ENCODE measurements at regions of chr15 and their contacts with region 1.

Region 1: GRCh38 chr15:90062023-90062442 is 40.2 kb downstream of the IDH2 start:
- DNase-seq: no peak
- H3K4me3 ChIP-seq: no peak overlapping the region
- H3K27ac ChIP-seq: peak overlapping the region; percentile 73
- H3K4me1 ChIP-seq: peaks cover 63% of the 10 kb centered on the region
- H3K27me3 ChIP-seq: no peaks in the 10 kb centered on the region
- CTCF ChIP-seq: no peak
- POLR2A ChIP-seq: no peak

Region 2: DNA sequence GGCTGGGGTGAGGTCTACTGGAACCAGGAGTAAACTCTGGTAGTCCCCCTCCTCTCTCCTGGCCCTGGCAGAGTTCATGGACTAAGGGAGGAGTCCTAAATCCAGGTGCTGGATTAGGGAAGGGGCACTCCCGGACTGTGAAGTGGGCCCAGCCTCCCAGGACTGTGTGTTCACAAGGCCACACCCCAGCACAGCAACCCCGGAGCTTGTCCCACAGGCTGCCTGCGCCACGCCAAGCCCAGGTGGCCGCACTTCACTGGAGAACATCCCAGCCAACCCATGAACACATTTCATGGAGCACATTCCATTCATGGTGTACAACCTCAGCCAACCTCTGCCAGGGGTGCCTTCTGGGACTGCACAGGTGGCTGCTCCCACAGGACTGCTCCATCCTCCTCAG is 157.5 kb before region 1 on chr15:
- intact Hi-C with region 1: loop called (anchors 10 kb)
- DNase-seq: no peak
- H3K4me3 ChIP-seq: no peak overlapping the region
- H3K27ac ChIP-seq: no peak overlapping the region
- H3K4me1 ChIP-seq: no peaks in the 10 kb centered on the region
- H3K27me3 ChIP-seq: no peaks in the 10 kb centered on the region
- CTCF ChIP-seq: no peak
- POLR2A ChIP-seq: no peak

Region 3: DNA sequence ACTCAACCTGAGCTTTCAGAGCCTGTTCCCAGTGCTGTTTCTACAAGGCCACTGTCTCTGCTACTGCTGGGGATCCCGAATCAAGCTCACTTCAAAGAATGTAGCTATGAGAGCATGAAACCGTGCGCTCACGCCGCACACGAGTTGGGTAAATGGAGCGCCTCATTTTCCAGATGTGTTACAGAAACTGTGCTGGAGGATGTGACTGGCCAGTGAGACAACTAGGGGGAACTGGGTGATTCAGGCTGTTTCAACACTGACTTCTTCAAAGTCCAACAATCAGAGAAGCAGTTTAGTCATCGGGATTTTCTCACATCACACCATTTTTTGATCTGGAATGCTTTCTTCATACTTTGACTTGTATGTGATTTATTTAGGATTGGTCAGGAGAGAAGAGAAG is 57.4 kb before region 1 on chr15:
- intact Hi-C with region 1: no loop called
- DNase-seq: no peak
- H3K4me3 ChIP-seq: peak overlapping the region in 1 of 2 donors; percentile 4
- H3K27ac ChIP-seq: peak overlapping the region; percentile 95
- H3K4me1 ChIP-seq: peaks cover 72% of the 10 kb centered on the region
- H3K27me3 ChIP-seq: no peaks in the 10 kb centered on the region
- CTCF ChIP-seq: no peak
- POLR2A ChIP-seq: no peak

Region 4: GRCh38 chr15:90131848-90132247 is 69.8 kb after region 1 on chr15:
- intact Hi-C with region 1: no loop called
- DNase-seq: no peak
- H3K4me3 ChIP-seq: no peak overlapping the region
- H3K27ac ChIP-seq: no peak overlapping the region
- H3K4me1 ChIP-seq: peaks cover under 1% of the 10 kb centered on the region
- H3K27me3 ChIP-seq: no peaks in the 10 kb centered on the region
- CTCF ChIP-seq: no peak
- POLR2A ChIP-seq: no peak